A549 (cell line): ENCODE measurements at regions of chr9 and their contacts with region 1.

Region 1: GRCh38 chr9:35859310-35859989 is 10.8 kb downstream of the OR13J1 start:
- DNase-seq: peak; percentile 29 to 42
- ATAC-seq: peak; percentile 66 to 74
- H3K4me3 ChIP-seq: no peak overlapping the region
- H3K27ac ChIP-seq: no peak overlapping the region
- H3K4me1 ChIP-seq: no peaks in the 10 kb centered on the region
- CTCF ChIP-seq: no peak
- EP300 ChIP-seq: no peak
- POLR2A ChIP-seq: no peak
- RAD21 ChIP-seq: no peak

Region 2: DNA sequence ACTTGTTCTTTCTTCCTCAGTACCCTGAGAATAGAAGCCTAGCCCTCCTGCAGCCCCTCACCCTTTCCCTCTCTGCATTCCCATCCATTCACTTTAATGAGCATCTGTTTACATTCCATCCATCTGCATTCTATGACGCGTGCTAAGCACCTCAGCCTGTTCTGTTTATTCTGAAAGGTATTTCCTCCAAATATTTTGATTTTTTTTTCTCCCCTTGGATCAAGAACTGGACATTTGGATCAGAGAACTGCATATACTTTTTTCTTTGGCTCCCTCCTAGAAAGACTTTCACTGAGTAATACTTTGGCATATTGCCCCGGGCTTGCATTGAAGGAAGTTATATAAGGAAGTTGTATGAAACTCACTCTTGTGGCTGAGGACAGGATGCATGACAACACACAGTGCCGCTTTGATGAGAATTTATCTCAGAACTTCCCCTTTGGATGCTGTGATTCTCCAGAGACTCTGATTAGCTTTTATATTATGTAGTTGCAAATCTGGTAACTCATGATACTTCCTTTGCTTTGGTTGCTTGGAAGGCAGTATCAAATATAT is 14.7 kb before region 1 on chr9:
- CTCF ChIA-PET with region 1: interaction called, 16 read pairs
- POLR2A ChIA-PET with region 1: no interaction called
- DNase-seq: peak in 1 of 2 experiments; percentile 56
- ATAC-seq: peak in 1 of 2 experiments; percentile 55; a peak in 3 of 6 replicates
- H3K4me3 ChIP-seq: no peak overlapping the region
- H3K27ac ChIP-seq: no peak overlapping the region
- H3K4me1 ChIP-seq: peaks cover 13% of the 10 kb centered on the region
- CTCF ChIP-seq: no peak
- EP300 ChIP-seq: no peak
- POLR2A ChIP-seq: no peak
- RAD21 ChIP-seq: no peak